CD8-positive, alpha-beta T cell (primary cell): ENCODE measurements at regions of chr3 and their contacts with region 1.

Region 1: DNA sequence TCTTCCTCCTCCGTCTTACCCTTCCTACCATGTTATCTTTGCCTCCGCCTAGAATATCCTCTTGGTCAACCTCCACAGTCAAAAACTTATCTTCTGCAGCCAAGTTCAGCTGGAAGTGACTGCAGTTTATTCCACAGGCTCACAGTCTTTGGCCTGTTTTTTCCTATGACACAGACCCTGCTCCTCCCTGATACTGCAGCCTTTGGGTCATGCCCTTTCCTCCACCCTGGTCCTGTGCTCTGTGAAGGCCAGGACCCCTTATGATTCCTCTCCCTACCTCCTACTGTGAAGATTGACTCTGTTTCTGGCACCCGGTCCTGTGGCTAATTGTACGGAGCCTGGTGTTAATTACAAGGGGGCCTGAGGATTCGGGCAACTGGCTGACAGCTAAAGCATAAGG is 49.3 kb upstream of the SCN5A start:
- DNase-seq: no peak
- ATAC-seq: no peak
- H3K4me3 ChIP-seq: no peak overlapping the region
- H3K4me3 Mint-ChIP-seq: no peak overlapping the region
- H3K27ac ChIP-seq: no peak overlapping the region
- H3K27ac Mint-ChIP-seq: no peak overlapping the region
- H3K4me1 ChIP-seq: no peaks in the 10 kb centered on the region
- H3K4me1 Mint-ChIP-seq: no peaks in the 10 kb centered on the region
- H3K27me3 ChIP-seq: no peaks in the 10 kb centered on the region
- H3K27me3 Mint-ChIP-seq: peaks cover 7% of the 10 kb centered on the region
- CTCF ChIP-seq: no peak

Region 2: GRCh38 chr3:37956723-37957528 is 741.8 kb before region 1 on chr3:
- CTCF ChIA-PET with region 1: no interaction called
- POLR2A ChIA-PET with region 1: no interaction called
- intact Hi-C with region 1: no loop called
- DNase-seq: peak in 1 of 9 experiments; percentile 23
- ATAC-seq: no peak
- H3K4me3 ChIP-seq: no peak overlapping the region
- H3K4me3 Mint-ChIP-seq: peak overlapping the region; percentile 52
- H3K27ac ChIP-seq: peak overlapping the region; percentile 34 to 50
- H3K27ac Mint-ChIP-seq: peak overlapping the region; percentile 93
- H3K4me1 ChIP-seq: peaks cover 23% of the 10 kb centered on the region
- H3K4me1 Mint-ChIP-seq: peaks cover 27% of the 10 kb centered on the region
- H3K27me3 ChIP-seq: no peaks in the 10 kb centered on the region
- H3K27me3 Mint-ChIP-seq: no peaks in the 10 kb centered on the region
- CTCF ChIP-seq: no peak

Region 3: GRCh38 chr3:38627956-38628355 is 70.8 kb before region 1 on chr3:
- CTCF ChIA-PET with region 1: no interaction called
- POLR2A ChIA-PET with region 1: no interaction called
- intact Hi-C with region 1: loop called in 1 of 2 experiments (anchors 2 kb)
- DNase-seq: peak in 2 of 9 experiments; percentile 5 to 23
- ATAC-seq: no peak
- H3K4me3 ChIP-seq: no peak overlapping the region
- H3K4me3 Mint-ChIP-seq: no peak overlapping the region
- H3K27ac ChIP-seq: no peak overlapping the region
- H3K27ac Mint-ChIP-seq: no peak overlapping the region
- H3K4me1 ChIP-seq: no peaks in the 10 kb centered on the region
- H3K4me1 Mint-ChIP-seq: no peaks in the 10 kb centered on the region
- H3K27me3 ChIP-seq: no peaks in the 10 kb centered on the region
- H3K27me3 Mint-ChIP-seq: no peaks in the 10 kb centered on the region
- CTCF ChIP-seq: no peak

Region 4: DNA sequence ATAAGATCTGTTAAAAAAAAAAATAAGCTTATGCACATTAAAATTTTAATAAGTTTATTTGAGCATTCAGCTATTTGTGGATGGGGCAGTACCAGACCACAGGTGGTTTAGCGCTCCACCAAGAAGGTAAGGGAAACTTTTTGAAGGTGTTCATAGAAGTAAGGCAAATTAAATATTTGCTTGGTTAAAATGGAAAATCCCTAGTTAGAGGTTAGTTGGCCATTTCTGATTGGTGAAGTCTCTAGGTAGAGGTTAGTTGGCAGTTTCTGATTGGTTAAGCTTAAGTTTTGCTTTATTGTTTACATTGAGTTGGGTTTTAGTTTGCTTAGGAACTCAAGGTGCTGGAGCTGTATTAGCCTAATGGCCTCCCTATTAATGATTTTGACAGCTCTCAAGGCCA is 322.3 kb after region 1 on chr3:
- CTCF ChIA-PET with region 1: no interaction called
- POLR2A ChIA-PET with region 1: no interaction called
- intact Hi-C with region 1: no loop called
- DNase-seq: peak in 1 of 9 experiments; percentile 12
- ATAC-seq: no peak
- H3K4me3 ChIP-seq: no peak overlapping the region
- H3K4me3 Mint-ChIP-seq: no peak overlapping the region
- H3K27ac ChIP-seq: no peak overlapping the region
- H3K27ac Mint-ChIP-seq: no peak overlapping the region
- H3K4me1 ChIP-seq: no peaks in the 10 kb centered on the region
- H3K4me1 Mint-ChIP-seq: no peaks in the 10 kb centered on the region
- H3K27me3 ChIP-seq: no peaks in the 10 kb centered on the region
- H3K27me3 Mint-ChIP-seq: peaks cover 17% of the 10 kb centered on the region
- CTCF ChIP-seq: no peak